ENCODE measurements at regions of chr2 and their contacts with region 1.

Region 1: GRCh38 chr2:197515739-197516392 is at the start of gene MOB4:
- DNase-seq: peak; percentile 92 to 96 (median 93)
- H3K4me3 ChIP-seq: peak within 1 kb of the TSS; percentile 91
- H3K4me3 Mint-ChIP-seq: peak within 1 kb of the TSS; percentile 88 to 99 (median 97)
- H3K27ac ChIP-seq: peak within 1 kb of the TSS; percentile 94
- H3K27ac Mint-ChIP-seq: peak within 1 kb of the TSS; percentile 90 to 97 (median 96)
- H3K4me1 ChIP-seq: peaks cover 25% of the 10 kb centered on the region
- H3K4me1 Mint-ChIP-seq: peaks cover 36 to 53% (median 44%) of the 10 kb centered on the region in 3 donors
- H3K27me3 ChIP-seq: no peaks in the 10 kb centered on the region
- H3K27me3 Mint-ChIP-seq: no peaks in the 10 kb centered on the region
- total RNA-seq, gene MOB4: 21.9 to 26.2 TPM

Region 2: DNA sequence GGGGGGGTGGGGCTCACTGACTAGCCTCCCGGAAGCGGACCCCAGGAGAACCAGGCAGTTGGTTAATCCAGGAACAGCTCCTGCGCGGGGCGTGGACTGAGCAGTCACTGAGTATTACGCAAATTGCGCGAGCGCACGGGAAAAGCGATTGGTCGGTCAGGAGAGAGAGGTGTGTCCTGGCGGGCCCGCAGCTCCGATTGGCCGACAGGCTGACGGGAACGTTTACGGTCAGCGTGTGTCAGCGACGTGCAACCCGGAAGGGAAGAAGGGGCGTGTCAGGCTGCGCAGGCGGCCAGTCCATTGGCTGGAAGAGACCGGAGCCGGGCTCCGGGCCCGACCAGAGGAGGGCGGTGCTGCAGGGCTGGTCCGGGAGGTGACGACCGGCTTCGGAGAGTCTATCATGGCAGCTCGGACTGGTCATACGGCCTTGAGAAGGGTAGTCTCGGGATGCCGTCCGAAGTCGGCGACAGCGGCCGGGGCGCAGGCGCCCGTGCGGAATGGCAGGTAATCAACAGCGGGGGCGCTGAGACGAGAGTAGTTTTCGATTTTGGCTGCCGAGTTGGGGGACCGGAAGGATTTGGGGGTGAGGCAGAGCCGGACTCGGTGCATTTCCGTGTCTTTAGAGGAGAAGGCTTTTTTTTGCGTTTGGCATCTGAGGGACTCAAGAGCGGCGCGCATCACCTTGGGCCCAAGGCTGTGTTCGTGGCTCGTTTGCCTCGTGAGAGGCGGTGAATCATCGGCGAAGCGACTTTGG is 62.5 kb before region 1 on chr2 and contains the start of gene COQ10B:
- CTCF ChIA-PET with region 1: interaction called, 4 read pairs
- POLR2A ChIA-PET with region 1: interaction called, 15 read pairs
- DNase-seq: peak; percentile 97 to 100 (median 99)
- H3K4me3 ChIP-seq: peak within 1 kb of the TSS; percentile 83
- H3K4me3 Mint-ChIP-seq: peak within 1 kb of the TSS; percentile 94 to 100 (median 99)
- H3K27ac ChIP-seq: peak within 1 kb of the TSS; percentile 99
- H3K27ac Mint-ChIP-seq: peak within 1 kb of the TSS; percentile 97 to 100 (median 100)
- H3K4me1 ChIP-seq: peaks cover 29% of the 10 kb centered on the region
- H3K4me1 Mint-ChIP-seq: peaks cover 40 to 54% (median 51%) of the 10 kb centered on the region in 3 donors
- H3K27me3 ChIP-seq: no peaks in the 10 kb centered on the region
- H3K27me3 Mint-ChIP-seq: peaks cover 0 to 5% of the 10 kb centered on the region in 2 donors
- total RNA-seq, gene COQ10B: 23.4 to 23.7 TPM

Region 3: DNA sequence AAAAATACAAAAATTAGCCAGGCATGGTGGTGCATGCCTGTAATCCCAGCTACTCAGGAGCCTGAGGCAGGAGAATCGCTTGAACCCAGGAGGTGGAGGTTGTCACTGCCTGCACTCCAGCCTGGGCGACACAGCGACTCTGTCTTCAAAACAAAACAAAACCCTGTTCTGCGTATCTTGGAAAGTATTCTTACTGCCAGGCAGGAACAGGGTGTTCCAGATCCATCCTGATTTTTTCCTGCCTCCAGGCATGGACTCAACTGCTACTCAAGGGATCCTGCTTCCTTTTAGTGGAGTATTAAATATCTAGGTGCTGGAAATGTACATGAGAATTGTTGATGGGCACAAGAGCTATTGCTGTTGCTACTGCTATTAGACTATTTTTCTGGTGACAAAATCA is 28.5 kb before region 1 on chr2:
- CTCF ChIA-PET with region 1: no interaction called
- POLR2A ChIA-PET with region 1: no interaction called
- DNase-seq: no peak
- H3K4me3 ChIP-seq: no peak overlapping the region
- H3K4me3 Mint-ChIP-seq: no peak overlapping the region
- H3K27ac ChIP-seq: no peak overlapping the region
- H3K27ac Mint-ChIP-seq: peak overlapping the region in 1 of 8 donors; percentile 73
- H3K4me1 ChIP-seq: no peaks in the 10 kb centered on the region
- H3K4me1 Mint-ChIP-seq: peaks cover 0 to 4% (median 0%) of the 10 kb centered on the region in 3 donors
- H3K27me3 ChIP-seq: no peaks in the 10 kb centered on the region
- H3K27me3 Mint-ChIP-seq: no peaks in the 10 kb centered on the region

Region 4: DNA sequence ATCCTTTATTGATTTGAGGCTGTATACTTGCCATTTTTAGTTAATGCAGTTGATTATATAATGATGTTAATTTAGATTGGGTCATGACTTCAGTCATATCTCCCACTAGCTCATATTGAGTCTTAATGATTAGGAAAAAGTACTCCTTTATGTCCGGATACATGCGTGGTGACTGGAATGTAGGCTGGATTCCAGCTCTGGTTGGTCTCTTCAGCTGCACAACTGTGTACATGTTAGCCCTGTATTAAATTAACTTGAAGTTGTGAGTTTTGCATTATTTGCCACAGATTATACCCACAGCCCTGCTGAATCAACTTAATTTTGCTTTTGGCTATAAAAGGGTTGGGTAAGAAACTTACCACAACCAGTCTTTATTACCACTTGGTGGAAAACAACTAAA is 22.5 kb after region 1 on chr2:
- CTCF ChIA-PET with region 1: no interaction called
- POLR2A ChIA-PET with region 1: no interaction called
- DNase-seq: no peak
- H3K4me3 ChIP-seq: no peak overlapping the region
- H3K4me3 Mint-ChIP-seq: no peak overlapping the region
- H3K27ac ChIP-seq: no peak overlapping the region
- H3K27ac Mint-ChIP-seq: peak overlapping the region in 2 of 8 donors; percentile 29 to 52
- H3K4me1 ChIP-seq: peaks cover 13% of the 10 kb centered on the region
- H3K4me1 Mint-ChIP-seq: peaks cover 37 to 64% (median 63%) of the 10 kb centered on the region in 3 donors
- H3K27me3 ChIP-seq: no peaks in the 10 kb centered on the region
- H3K27me3 Mint-ChIP-seq: no peaks in the 10 kb centered on the region

Region 5: DNA sequence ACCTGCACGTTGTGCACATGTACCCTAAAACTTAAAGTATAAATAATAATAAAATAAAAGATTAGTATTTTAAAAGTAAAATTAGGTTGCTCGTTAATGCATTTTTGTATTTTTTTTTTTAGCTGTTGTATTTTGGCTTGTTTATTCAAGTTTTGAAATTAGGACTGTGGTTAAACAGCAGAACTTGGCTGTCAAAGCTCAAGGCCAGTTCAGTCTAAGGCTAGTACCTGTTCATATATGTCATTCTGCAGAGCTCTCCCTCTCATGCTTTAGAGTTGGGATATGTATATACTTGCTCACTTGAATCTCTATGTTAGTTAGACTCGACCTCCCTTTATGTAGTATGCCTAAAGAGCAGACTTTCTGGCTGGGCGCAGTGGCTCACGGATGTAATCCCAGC is 32.7 kb after region 1 on chr2:
- CTCF ChIA-PET with region 1: no interaction called
- POLR2A ChIA-PET with region 1: no interaction called
- DNase-seq: no peak
- H3K4me3 ChIP-seq: no peak overlapping the region
- H3K4me3 Mint-ChIP-seq: no peak overlapping the region
- H3K27ac ChIP-seq: no peak overlapping the region
- H3K27ac Mint-ChIP-seq: peak overlapping the region in 1 of 8 donors; percentile 85
- H3K4me1 ChIP-seq: no peaks in the 10 kb centered on the region
- H3K4me1 Mint-ChIP-seq: peaks cover under 1 to 16% (median 8%) of the 10 kb centered on the region in 3 donors
- H3K27me3 ChIP-seq: no peaks in the 10 kb centered on the region
- H3K27me3 Mint-ChIP-seq: no peaks in the 10 kb centered on the region

Region 6: GRCh38 chr2:197705121-197705911 is 189.4 kb after region 1 on chr2 and contains the start of gene MARS2:
- CTCF ChIA-PET with region 1: interaction called, 3 read pairs
- POLR2A ChIA-PET with region 1: interaction called, 13 read pairs
- DNase-seq: peak; percentile 90 to 95 (median 91)
- H3K4me3 ChIP-seq: peak within 1 kb of the TSS; percentile 88
- H3K4me3 Mint-ChIP-seq: peak within 1 kb of the TSS; percentile 86 to 95 (median 92)
- H3K27ac ChIP-seq: peak within 1 kb of the TSS; percentile 60
- H3K27ac Mint-ChIP-seq: peak within 1 kb of the TSS; percentile 86 to 99 (median 94)
- H3K4me1 ChIP-seq: peaks cover 40% of the 10 kb centered on the region
- H3K4me1 Mint-ChIP-seq: peaks cover 39 to 57% (median 56%) of the 10 kb centered on the region in 3 donors
- H3K27me3 ChIP-seq: no peaks in the 10 kb centered on the region
- H3K27me3 Mint-ChIP-seq: no peaks in the 10 kb centered on the region
- total RNA-seq, gene MARS2: 27.1 to 27.9 TPM